ENCODE measurements at regions of chr11 and their contacts with region 1.

Region 1: GRCh38 chr11:110219011-110219785 is 77.2 kb downstream of the RDX start:
- DNase-seq: no peak
- H3K4me3 Mint-ChIP-seq: no peak overlapping the region
- H3K27ac Mint-ChIP-seq: no peak overlapping the region
- H3K4me1 Mint-ChIP-seq: no peaks in the 10 kb centered on the region
- H3K27me3 Mint-ChIP-seq: no peaks in the 10 kb centered on the region

Region 2: GRCh38 chr11:110251837-110252236 is 32.6 kb after region 1 on chr11:
- intact Hi-C with region 1: loop called (anchors 5 kb)
- DNase-seq: no peak
- H3K4me3 Mint-ChIP-seq: no peak overlapping the region
- H3K27ac Mint-ChIP-seq: peak overlapping the region; percentile 40
- H3K4me1 Mint-ChIP-seq: peaks cover 14% of the 10 kb centered on the region
- H3K27me3 Mint-ChIP-seq: no peaks in the 10 kb centered on the region